HCT116 (cell line): ENCODE measurements at regions of chr2 and their contacts with region 1.

Region 1: DNA sequence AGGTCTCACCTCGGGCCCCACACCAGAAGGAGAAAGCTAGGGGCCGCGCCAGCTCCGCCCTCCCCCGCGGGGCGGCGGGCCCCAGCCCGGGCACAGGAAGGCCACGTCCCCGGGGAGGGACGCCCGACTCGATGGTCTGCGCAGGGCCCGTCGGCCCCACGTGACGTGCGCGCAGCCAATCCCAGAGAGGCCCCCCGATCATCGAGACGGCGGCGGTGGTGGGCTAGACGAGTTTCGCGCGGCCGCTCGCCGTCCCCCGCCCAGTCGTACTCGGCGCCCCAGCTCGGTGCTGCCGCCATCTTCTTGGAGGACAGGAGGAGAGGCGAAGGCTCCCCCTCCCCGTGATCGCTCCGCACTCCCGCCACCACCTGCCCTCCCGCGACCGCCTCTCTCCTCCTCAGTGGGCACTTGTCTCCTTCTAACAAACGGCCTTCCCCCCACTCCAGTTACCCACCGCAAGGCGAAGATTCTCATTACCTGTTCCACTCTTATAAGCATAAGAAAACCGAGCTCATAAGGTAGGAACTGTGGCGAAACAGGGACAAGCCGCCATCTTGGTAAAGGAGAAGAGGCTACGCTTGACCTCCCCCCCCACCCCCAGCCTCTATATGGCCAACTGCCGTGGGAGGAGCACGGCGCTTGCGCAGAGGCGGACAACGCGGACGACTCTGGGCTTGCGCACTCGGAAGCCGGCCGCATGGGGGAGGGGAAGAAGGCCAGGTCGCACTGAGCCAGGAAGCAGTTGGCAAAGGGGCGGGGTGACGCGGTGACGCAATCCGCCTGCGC is at the start of gene HDLBP:
- DNase-seq: peak; percentile 97
- ATAC-seq: peak; percentile 85
- H3K4me3 ChIP-seq: peak within 1 kb of the TSS; percentile 94 to 98
- H3K27ac ChIP-seq: peak within 1 kb of the TSS; percentile 85
- H3K4me1 ChIP-seq: peaks cover 15 to 33% of the 10 kb centered on the region in 2 experiments; a peak in 3 of 4 replicates
- H3K27me3 ChIP-seq: no peaks in the 10 kb centered on the region
- CTCF ChIP-seq: no peak; a peak in 1 of 6 replicates
- POLR2A ChIP-seq: peak; percentile 76
- RAD21 ChIP-seq: no peak
- total RNA-seq, gene HDLBP: 462 TPM

Region 2: DNA sequence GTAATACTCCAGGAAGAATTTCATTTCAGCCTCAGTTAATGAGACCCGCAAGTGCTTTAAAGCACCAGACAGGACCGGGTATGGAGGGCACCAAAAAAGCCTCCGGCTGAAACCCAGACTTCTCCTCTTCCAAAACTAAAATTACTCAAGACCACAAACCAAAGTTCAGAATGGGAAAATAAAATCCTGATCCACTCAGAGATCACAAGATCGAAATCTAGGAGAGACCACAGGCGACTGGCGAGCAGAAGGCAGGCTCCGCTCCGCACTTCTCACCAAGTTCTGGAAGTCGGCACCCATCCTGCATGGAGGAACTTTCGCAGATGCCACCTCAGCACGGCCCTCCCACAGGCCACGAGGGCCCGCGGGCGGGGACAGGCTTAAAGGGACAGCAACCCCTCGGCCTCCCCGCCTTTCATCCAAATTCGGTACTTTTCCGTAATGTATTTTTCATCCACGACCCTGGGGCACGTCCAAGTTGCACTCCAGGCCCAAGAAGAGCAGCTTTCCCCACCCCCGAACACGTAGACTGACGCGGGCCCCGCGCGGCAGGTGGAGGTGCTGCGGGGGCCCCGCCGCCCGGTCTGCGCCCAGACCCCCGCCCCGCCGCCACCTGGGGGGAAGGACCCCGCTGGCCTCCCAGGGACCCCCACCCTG is 43.5 kb before region 1 on chr2:
- CTCF ChIA-PET with region 1: no interaction called
- POLR2A ChIA-PET with region 1: no interaction called
- RAD21 ChIA-PET with region 1: no interaction called
- intact Hi-C with region 1: loop called (anchors 5 kb)
- DNase-seq: peak; percentile 38
- ATAC-seq: peak; percentile 74
- H3K4me3 ChIP-seq: peak overlapping the region; percentile 62 to 68
- H3K27ac ChIP-seq: peak overlapping the region; percentile 85
- H3K4me1 ChIP-seq: peaks cover 21 to 51% of the 10 kb centered on the region in 2 experiments; a peak in 3 of 4 replicates
- H3K27me3 ChIP-seq: no peaks in the 10 kb centered on the region
- CTCF ChIP-seq: no peak
- POLR2A ChIP-seq: no peak
- RAD21 ChIP-seq: no peak

Region 3: GRCh38 chr2:241302759-241303651 is 12.3 kb before region 1 on chr2:
- CTCF ChIA-PET with region 1: no interaction called
- POLR2A ChIA-PET with region 1: interaction called, 13 read pairs
- RAD21 ChIA-PET with region 1: no interaction called
- intact Hi-C with region 1: no loop called
- DNase-seq: no peak
- ATAC-seq: peak; percentile 32; the same call in 1 of the 2 replicates
- H3K4me3 ChIP-seq: no peak overlapping the region
- H3K27ac ChIP-seq: no peak overlapping the region
- H3K4me1 ChIP-seq: no peaks in the 10 kb centered on the region
- H3K27me3 ChIP-seq: no peaks in the 10 kb centered on the region
- CTCF ChIP-seq: no peak
- POLR2A ChIP-seq: no peak
- RAD21 ChIP-seq: no peak